Body of pancreas (tissue), 4 donors: ENCODE measurements at regions of chr16 and their contacts with region 1.

Region 1: DNA sequence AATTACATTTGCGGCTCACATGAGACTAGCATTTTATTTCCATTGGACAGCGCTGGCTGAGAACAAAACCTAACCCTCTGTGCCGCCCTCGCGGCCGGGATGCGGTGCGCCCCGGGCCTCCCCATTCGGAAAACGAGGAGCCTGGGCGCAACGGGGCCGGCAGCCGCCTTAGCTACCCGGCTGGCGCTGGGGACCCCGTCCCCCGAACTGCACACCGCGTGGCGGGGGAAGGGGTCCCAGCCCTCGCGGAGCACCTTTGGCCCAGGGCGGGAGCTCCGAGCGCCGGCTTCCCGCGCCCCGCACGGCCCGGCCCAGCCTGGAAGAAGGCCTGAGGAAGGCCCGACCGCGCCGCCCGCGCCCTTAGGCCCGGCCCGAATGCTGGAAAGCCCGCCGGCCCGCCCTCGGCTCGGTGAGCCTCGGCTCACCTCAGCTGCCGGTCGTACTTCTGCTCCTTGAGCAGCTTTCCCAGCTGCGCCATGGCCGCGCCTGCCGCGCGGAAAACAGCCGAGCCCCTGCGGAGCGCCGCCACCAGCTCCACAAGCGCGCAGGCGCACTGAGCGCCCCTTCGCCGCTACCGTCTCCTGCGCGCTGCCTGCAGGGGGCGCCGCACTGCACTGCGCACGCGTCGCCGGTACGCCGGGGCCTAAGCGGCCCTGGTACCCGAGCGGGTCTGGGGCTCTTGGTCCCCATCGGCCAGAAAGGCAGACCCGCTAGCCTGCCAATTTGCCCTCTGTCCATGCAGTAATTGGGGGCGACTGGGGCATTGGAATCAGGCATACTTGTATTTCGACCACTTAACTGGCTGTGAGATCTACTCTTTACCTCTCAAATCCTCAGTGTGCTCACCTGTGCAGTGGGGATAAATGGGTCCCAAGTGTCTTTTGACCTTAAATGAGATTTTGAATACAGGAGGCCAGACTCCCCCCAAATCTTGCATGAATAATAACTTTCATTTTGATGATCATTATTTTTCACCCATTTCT is at the start of gene NAE1:
- DNase-seq: peak; percentile 84 to 89 (median 88)
- ATAC-seq: peak; percentile 96
- H3K4me3 ChIP-seq: peak within 1 kb of the TSS; percentile 91 to 92
- H3K27ac ChIP-seq: peak within 1 kb of the TSS; percentile 68 to 94 (median 88)
- H3K4me1 ChIP-seq: peaks cover 18% of the 10 kb centered on the region
- H3K27me3 ChIP-seq: no peaks in the 10 kb centered on the region
- CTCF ChIP-seq: peak; percentile 91 to 100 (median 98)
- POLR2A ChIP-seq: peak; percentile 85 to 87 (median 85)
- total RNA-seq, gene NAE1: 25.7 to 34.6 TPM

Region 2: GRCh38 chr16:66869424-66869823 is 38.7 kb after region 1 on chr16:
- intact Hi-C with region 1: loop called (anchors 5 kb)
- DNase-seq: no peak
- ATAC-seq: no peak
- H3K4me3 ChIP-seq: no peak overlapping the region
- H3K27ac ChIP-seq: no peak overlapping the region
- H3K4me1 ChIP-seq: peaks cover 10% of the 10 kb centered on the region
- H3K27me3 ChIP-seq: no peaks in the 10 kb centered on the region
- CTCF ChIP-seq: no peak
- POLR2A ChIP-seq: no peak

Region 3: GRCh38 chr16:66961065-66961744 is 130.5 kb after region 1 on chr16 and contains the start of gene CES3:
- intact Hi-C with region 1: no loop called
- DNase-seq: peak; percentile 78 to 87 (median 84)
- ATAC-seq: peak; percentile 90
- H3K4me3 ChIP-seq: no peak within 1 kb of the TSS
- H3K27ac ChIP-seq: peak within 1 kb of the TSS in 1 of 4 donors; percentile 38
- H3K4me1 ChIP-seq: peaks cover 19% of the 10 kb centered on the region
- H3K27me3 ChIP-seq: no peaks in the 10 kb centered on the region
- CTCF ChIP-seq: peak; percentile 72 to 82 (median 79)
- POLR2A ChIP-seq: no peak
- total RNA-seq, gene CES3: 5.2 to 5.6 TPM

Region 4: DNA sequence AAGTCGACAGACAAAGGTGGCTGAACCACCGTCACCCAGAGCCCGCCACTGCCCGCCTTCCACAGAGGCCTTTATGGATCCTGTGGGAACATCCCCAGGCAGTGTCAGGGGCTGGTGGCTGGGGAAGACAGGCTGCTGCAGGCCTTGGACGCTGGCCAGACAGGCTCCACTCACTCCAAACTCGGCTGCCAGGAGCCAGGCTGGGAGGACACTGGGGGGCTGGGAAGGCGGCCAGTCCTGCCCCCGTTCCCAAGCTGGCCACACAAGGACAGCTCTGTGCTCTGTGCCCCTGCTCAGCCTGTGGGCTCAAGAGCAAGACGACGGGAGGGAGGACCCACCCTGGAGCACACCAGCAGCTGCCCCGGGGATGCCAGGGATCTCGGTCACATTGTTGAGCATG is 1120.8 kb after region 1 on chr16:
- intact Hi-C with region 1: no loop called
- DNase-seq: peak in 2 of 4 donors; percentile 15 to 36
- ATAC-seq: no peak
- H3K4me3 ChIP-seq: no peak overlapping the region
- H3K27ac ChIP-seq: no peak overlapping the region
- H3K4me1 ChIP-seq: no peaks in the 10 kb centered on the region
- H3K27me3 ChIP-seq: no peaks in the 10 kb centered on the region
- CTCF ChIP-seq: no peak
- POLR2A ChIP-seq: no peak